ENCODE measurements at regions of chr3 and their contacts with region 1.

Region 1: GRCh38 chr3:46976326-46977190 is at the start of gene CCDC12:
- DNase-seq: peak; percentile 98
- H3K4me3 ChIP-seq: peak within 1 kb of the TSS; percentile 57 to 96 (median 81)
- H3K27ac ChIP-seq: peak within 1 kb of the TSS; percentile 94
- H3K4me1 ChIP-seq: peaks cover 43% of the 10 kb centered on the region
- H3K27me3 ChIP-seq: no peaks in the 10 kb centered on the region
- CTCF ChIP-seq: no peak
- total RNA-seq, gene CCDC12: 17.8 to 42.1 TPM

Region 2: GRCh38 chr3:46695177-46695961 is 281.2 kb before region 1 on chr3:
- CTCF ChIA-PET with region 1: no interaction called
- dilution Hi-C with region 1: no loop called
- in situ Hi-C with region 1: no loop called
- intact Hi-C with region 1: loop called (anchors 2 kb)
- DNase-seq: no peak
- H3K4me3 ChIP-seq: no peak overlapping the region
- H3K27ac ChIP-seq: no peak overlapping the region
- H3K4me1 ChIP-seq: peaks cover 42% of the 10 kb centered on the region
- H3K27me3 ChIP-seq: no peaks in the 10 kb centered on the region
- CTCF ChIP-seq: peak; percentile 34 to 42

Region 3: GRCh38 chr3:46935168-46935858 is 41.2 kb before region 1 on chr3:
- CTCF ChIA-PET with region 1: interaction called, 8 read pairs
- dilution Hi-C with region 1: no loop called
- in situ Hi-C with region 1: no loop called
- intact Hi-C with region 1: loop called (anchors 1 kb)
- DNase-seq: peak; percentile 87
- H3K4me3 ChIP-seq: no peak overlapping the region
- H3K27ac ChIP-seq: peak overlapping the region; percentile 91
- H3K4me1 ChIP-seq: peaks cover 69% of the 10 kb centered on the region
- H3K27me3 ChIP-seq: no peaks in the 10 kb centered on the region
- CTCF ChIP-seq: peak; percentile 83 to 88

Region 4: DNA sequence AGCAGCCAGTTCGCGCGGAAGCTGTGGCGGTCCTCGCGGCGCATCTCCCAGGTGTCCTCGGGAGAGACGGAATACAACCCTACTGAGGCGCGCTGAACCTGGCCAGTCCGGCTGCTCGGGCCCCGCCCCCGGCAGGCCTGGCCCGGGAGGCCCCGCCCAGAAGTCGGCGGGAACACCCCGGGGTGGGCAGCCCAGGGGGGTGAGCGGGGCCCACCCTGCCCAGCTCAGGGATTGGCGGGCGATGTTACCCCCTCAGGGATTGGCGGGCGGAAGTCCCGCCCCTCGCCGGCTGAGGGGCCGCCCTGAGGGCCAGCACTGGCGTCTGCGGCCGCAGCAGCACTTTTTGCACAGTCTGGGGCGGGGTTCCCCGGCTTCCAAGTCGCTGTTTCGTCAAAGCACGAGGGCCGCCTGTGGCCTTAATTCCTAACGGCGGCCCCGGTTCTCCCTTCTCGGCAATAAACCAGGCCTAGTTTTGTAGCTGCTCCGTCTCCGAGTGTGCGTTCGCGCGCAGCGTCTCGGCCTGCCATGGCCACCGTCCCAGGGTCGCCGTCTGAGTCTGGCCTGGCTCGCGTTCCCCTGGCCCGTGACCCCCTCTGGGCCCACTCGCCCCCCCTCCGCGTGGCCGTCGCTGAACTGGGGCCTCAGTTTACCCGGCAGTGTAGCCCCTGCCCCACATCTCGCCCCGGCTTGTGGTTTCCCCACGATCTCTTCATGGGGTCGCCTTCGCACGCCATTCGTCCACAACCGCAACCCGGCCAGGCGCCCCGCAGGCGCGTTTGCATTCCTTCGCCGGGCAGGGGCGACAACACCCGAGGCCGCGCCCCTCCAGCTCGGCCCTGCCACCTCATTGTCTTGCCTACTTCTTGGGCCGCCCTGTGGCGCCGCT is 32.9 kb after region 1 on chr3:
- CTCF ChIA-PET with region 1: no interaction called
- dilution Hi-C with region 1: no loop called
- in situ Hi-C with region 1: no loop called
- intact Hi-C with region 1: no loop called
- DNase-seq: peak; percentile 20
- H3K4me3 ChIP-seq: peak overlapping the region in 1 of 3 experiments; percentile 20
- H3K27ac ChIP-seq: no peak overlapping the region
- H3K4me1 ChIP-seq: peaks cover 5% of the 10 kb centered on the region
- H3K27me3 ChIP-seq: no peaks in the 10 kb centered on the region
- CTCF ChIP-seq: no peak